B cell (primary cell): ENCODE measurements at regions of chr13 and their contacts with region 1.

Region 1: DNA sequence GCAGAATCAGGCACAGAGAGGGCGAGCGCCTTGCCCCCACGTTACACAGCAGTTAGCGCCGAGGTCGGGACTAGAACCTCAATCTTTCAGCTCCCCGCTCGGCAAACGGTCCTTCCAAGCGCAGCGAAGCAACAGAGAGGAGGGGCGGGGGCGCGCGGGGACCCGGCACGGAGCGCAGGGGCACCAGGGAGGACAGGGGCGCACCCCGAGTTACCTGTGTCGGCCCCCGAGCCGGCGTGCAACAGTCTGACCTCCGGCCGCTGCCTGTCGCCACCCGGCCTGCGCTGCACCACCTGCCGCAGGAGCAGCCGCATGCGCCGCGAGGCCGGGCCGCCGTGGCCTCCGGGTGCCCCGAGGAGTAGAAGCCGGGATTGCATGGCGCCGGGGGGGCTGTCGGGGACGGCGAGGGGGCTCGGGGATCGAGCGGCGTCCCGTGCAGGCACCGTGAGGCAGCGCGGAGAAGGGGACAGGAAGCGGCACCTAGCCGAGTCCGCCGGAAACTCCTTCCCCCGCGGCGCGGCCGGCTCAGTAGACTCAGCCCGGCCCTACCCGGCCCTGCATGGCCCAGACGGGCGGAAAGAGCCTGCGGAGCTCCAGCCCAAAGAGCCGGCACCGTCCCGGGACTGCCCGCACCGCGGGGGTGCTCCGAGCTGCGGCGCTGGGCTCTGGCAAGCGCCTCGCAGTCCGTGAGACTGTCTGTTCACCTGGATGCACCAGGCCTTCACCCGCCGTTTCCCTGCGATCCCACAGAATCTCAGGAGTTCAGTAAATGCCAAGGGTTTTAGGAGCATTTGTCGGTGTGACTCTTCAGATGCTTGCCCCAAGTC is at the start of gene VWA8:
- DNase-seq: peak; percentile 84
- ATAC-seq: peak; percentile 94
- H3K4me3 ChIP-seq: peak within 1 kb of the TSS; percentile 68 to 85 (median 74)
- H3K4me3 Mint-ChIP-seq: peak within 1 kb of the TSS; percentile 94
- H3K27ac ChIP-seq: peak within 1 kb of the TSS; percentile 54 to 63
- H3K27ac Mint-ChIP-seq: peak within 1 kb of the TSS; percentile 85
- H3K4me1 ChIP-seq: peaks cover 12 to 18% of the 10 kb centered on the region in 2 donors
- H3K4me1 Mint-ChIP-seq: peaks cover 15% of the 10 kb centered on the region
- H3K27me3 ChIP-seq: no peaks in the 10 kb centered on the region
- H3K27me3 Mint-ChIP-seq: peaks cover 13% of the 10 kb centered on the region
- CTCF ChIP-seq: no peak
- total RNA-seq, gene VWA8: 19.7 and 23.1 TPM in 2 replicates

Region 2: GRCh38 chr13:41456768-41457588 is 503.9 kb before region 1 on chr13 and contains the start of gene RGCC:
- CTCF ChIA-PET with region 1: no interaction called
- POLR2A ChIA-PET with region 1: no interaction called
- intact Hi-C with region 1: loop called (anchors 5 kb)
- DNase-seq: peak; percentile 89
- ATAC-seq: peak; percentile 75
- H3K4me3 ChIP-seq: peak within 1 kb of the TSS; percentile 25 to 71 (median 60)
- H3K4me3 Mint-ChIP-seq: peak within 1 kb of the TSS; percentile 82
- H3K27ac ChIP-seq: peak within 1 kb of the TSS in 1 of 2 donors; percentile 49
- H3K27ac Mint-ChIP-seq: peak within 1 kb of the TSS; percentile 32
- H3K4me1 ChIP-seq: peaks cover 27% of the 10 kb centered on the region in 2 donors
- H3K4me1 Mint-ChIP-seq: peaks cover 28% of the 10 kb centered on the region
- H3K27me3 ChIP-seq: peaks cover 0 to 48% (median 15%) of the 10 kb centered on the region in 4 experiments
- H3K27me3 Mint-ChIP-seq: peaks cover 38% of the 10 kb centered on the region
- CTCF ChIP-seq: no peak
- total RNA-seq, gene RGCC: 6.5 and 8.0 TPM in 2 replicates

Region 3: DNA sequence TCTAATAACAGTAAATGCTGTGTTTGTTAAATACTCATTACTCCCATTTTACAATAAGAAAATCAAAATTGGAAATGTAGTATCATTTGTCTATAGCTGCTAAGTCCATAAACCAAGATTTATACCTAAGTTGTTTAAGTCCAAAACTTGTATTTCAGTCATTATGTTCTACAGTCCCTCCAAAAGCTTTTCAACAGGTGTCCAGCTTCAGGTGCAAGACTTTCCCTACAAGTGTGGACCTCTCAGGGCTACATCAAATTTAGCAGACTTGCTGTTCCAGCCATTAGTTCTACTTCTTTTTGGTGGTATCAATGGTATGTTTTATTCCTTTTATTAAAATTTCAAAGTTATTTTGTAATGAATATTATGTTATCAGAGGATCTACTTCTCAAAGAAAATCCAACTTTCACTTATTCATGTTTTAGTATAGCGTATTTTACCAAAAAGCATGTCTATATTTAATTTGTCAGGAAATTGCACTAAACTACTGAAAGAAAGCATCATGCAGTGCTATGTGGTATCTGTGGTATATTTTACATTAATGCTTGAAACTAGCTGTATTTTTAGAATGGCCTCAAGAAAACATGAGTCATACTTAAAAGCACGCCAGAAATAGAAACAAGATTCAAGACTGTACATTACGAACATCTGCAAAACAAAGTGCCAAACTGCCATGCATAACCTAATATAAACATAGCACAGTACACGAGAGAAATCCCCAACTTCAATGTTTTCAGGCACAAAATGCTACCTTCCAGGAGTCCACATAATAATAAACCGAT is 44.5 kb before region 1 on chr13:
- CTCF ChIA-PET with region 1: no interaction called
- POLR2A ChIA-PET with region 1: no interaction called
- intact Hi-C with region 1: loop called (anchors 2 kb)
- DNase-seq: peak; percentile 28
- ATAC-seq: peak; percentile 83
- H3K4me3 ChIP-seq: no peak overlapping the region
- H3K4me3 Mint-ChIP-seq: peak overlapping the region; percentile 34
- H3K27ac ChIP-seq: peak overlapping the region; percentile 4 to 32
- H3K27ac Mint-ChIP-seq: peak overlapping the region; percentile 8
- H3K4me1 ChIP-seq: peaks cover 12 to 21% of the 10 kb centered on the region in 2 donors
- H3K4me1 Mint-ChIP-seq: peaks cover 36% of the 10 kb centered on the region
- H3K27me3 ChIP-seq: no peaks in the 10 kb centered on the region
- H3K27me3 Mint-ChIP-seq: no peaks in the 10 kb centered on the region
- CTCF ChIP-seq: no peak

Region 4: GRCh38 chr13:42039946-42040729 is 79.3 kb after region 1 on chr13:
- CTCF ChIA-PET with region 1: no interaction called
- POLR2A ChIA-PET with region 1: no interaction called
- intact Hi-C with region 1: loop called (anchors 2 kb)
- DNase-seq: peak; percentile 82
- ATAC-seq: peak; percentile 83
- H3K4me3 ChIP-seq: peak overlapping the region; percentile 61 to 75 (median 66)
- H3K4me3 Mint-ChIP-seq: peak overlapping the region; percentile 93
- H3K27ac ChIP-seq: peak overlapping the region in 1 of 2 donors; percentile 45
- H3K27ac Mint-ChIP-seq: peak overlapping the region; percentile 81
- H3K4me1 ChIP-seq: peaks cover 11 to 19% of the 10 kb centered on the region in 2 donors
- H3K4me1 Mint-ChIP-seq: peaks cover 20% of the 10 kb centered on the region
- H3K27me3 ChIP-seq: peaks cover 0 to 23% (median 11%) of the 10 kb centered on the region in 4 experiments
- H3K27me3 Mint-ChIP-seq: peaks cover 12% of the 10 kb centered on the region
- CTCF ChIP-seq: no peak

Region 5: GRCh38 chr13:42048682-42049453 is 88.0 kb after region 1 on chr13:
- CTCF ChIA-PET with region 1: no interaction called
- POLR2A ChIA-PET with region 1: no interaction called
- intact Hi-C with region 1: loop called (anchors 2 kb)
- DNase-seq: peak; percentile 61
- ATAC-seq: peak; percentile 71
- H3K4me3 ChIP-seq: peak overlapping the region; percentile 59 to 79 (median 64)
- H3K4me3 Mint-ChIP-seq: peak overlapping the region; percentile 88
- H3K27ac ChIP-seq: no peak overlapping the region
- H3K27ac Mint-ChIP-seq: peak overlapping the region; percentile 37
- H3K4me1 ChIP-seq: peaks cover 17 to 19% of the 10 kb centered on the region in 2 donors
- H3K4me1 Mint-ChIP-seq: peaks cover 10% of the 10 kb centered on the region
- H3K27me3 ChIP-seq: peaks cover 0 to 35% (median 28%) of the 10 kb centered on the region in 4 experiments
- H3K27me3 Mint-ChIP-seq: peaks cover 39% of the 10 kb centered on the region
- CTCF ChIP-seq: no peak